ENCODE measurements at regions of chr7 and their contacts with region 1.

Region 1: GRCh38 chr7:104990976-104991375 is 23.0 kb upstream of the KMT2E start:
- DNase-seq: no peak
- H3K4me3 ChIP-seq: no peak overlapping the region
- H3K27ac ChIP-seq: no peak overlapping the region
- H3K4me1 ChIP-seq: peaks cover 17% of the 10 kb centered on the region
- H3K27me3 ChIP-seq: no peaks in the 10 kb centered on the region
- CTCF ChIP-seq: no peak
- POLR2A ChIP-seq: no peak

Region 2: DNA sequence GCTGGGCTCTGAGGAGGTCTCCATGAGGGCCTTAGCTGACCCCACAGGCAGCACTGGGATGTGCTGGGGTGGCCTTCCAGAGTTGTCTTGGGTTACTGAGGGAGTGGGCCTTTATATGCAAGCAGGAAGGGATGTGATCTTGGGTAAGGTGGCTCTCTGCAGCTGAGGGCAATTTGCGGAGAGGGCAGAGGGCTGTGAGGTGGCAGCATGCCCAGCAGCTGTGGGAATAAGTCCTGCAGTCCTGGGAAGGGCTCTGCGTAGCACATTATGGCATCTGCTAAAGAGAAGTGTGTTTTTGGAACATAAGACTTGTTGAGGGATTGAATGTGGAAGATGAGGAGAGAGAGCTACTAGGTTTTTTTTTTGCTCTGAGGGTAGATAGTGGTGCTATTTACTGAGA is 76.6 kb before region 1 on chr7:
- CTCF ChIA-PET with region 1: no interaction called
- POLR2A ChIA-PET with region 1: no interaction called
- dilution Hi-C with region 1: no loop called
- intact Hi-C with region 1: no loop called
- DNase-seq: no peak
- H3K4me3 ChIP-seq: no peak overlapping the region
- H3K27ac ChIP-seq: no peak overlapping the region
- H3K4me1 ChIP-seq: no peaks in the 10 kb centered on the region
- H3K27me3 ChIP-seq: peaks cover 0 to 8% of the 10 kb centered on the region in 2 experiments
- CTCF ChIP-seq: no peak
- POLR2A ChIP-seq: no peak

Region 3: GRCh38 chr7:105003275-105003674 is 12.3 kb after region 1 on chr7:
- CTCF ChIA-PET with region 1: interaction called, 97 read pairs
- POLR2A ChIA-PET with region 1: interaction called, 3 read pairs
- dilution Hi-C with region 1: no loop called
- intact Hi-C with region 1: loop called (anchors 1 kb)
- DNase-seq: peak; percentile 66
- H3K4me3 ChIP-seq: no peak overlapping the region
- H3K27ac ChIP-seq: no peak overlapping the region
- H3K4me1 ChIP-seq: peaks cover 33% of the 10 kb centered on the region
- H3K27me3 ChIP-seq: no peaks in the 10 kb centered on the region
- CTCF ChIP-seq: no peak
- POLR2A ChIP-seq: no peak

Measured in endothelial cell of umbilical vein (primary cell).